BJ (cell line): ENCODE measurements at regions of chr21 and their contacts with region 1.

Region 1: DNA sequence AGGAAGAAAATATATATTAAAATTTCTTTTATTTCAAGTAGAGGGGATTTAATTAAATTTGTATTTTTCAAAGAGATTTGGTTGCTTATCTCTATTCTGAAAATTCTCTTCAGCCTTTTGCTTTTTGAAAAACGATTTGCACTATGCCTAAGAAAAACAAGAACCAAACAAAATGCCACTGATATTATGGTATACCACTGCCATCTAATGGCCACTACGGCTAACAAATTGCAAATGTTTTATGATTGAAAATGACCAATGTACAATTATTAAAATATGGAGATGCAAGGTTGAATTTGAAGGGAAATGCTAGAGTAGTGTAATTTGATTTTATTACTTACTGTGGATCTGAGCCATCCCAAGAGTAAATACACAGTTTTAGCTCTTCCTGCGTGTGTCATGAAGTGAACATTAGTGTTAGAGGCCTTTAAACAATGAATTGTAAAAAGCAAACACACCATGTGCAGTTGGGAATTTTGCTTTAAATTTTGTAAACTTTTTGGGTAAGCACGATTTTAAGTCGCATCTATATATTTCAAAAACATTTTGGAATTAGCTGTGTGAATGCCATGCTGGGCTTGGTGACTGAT is 137.4 kb upstream of the USP25 start:
- DNase-seq: no peak
- H3K4me3 ChIP-seq: no peak overlapping the region
- H3K27me3 ChIP-seq: 0 out of 2 replicates have a peak, but pooled peaks cover 1% of the 10 kb centered on the region
- CTCF ChIP-seq: peak; percentile 57

Region 2: GRCh38 chr21:14259747-14260146 is 1332.6 kb before region 1 on chr21:
- CTCF ChIA-PET with region 1: interaction called, 11 read pairs
- POLR2A ChIA-PET with region 1: no interaction called
- DNase-seq: no peak
- H3K4me3 ChIP-seq: no peak overlapping the region
- H3K27me3 ChIP-seq: no peaks in the 10 kb centered on the region; the same call in 1 of the 2 replicates
- CTCF ChIP-seq: peak; percentile 45

Region 3: GRCh38 chr21:15616864-15617574 is 24.7 kb after region 1 on chr21:
- CTCF ChIA-PET with region 1: no interaction called
- POLR2A ChIA-PET with region 1: no interaction called
- DNase-seq: no peak
- H3K4me3 ChIP-seq: no peak overlapping the region
- H3K27me3 ChIP-seq: no peaks in the 10 kb centered on the region
- CTCF ChIP-seq: no peak

Region 4: DNA sequence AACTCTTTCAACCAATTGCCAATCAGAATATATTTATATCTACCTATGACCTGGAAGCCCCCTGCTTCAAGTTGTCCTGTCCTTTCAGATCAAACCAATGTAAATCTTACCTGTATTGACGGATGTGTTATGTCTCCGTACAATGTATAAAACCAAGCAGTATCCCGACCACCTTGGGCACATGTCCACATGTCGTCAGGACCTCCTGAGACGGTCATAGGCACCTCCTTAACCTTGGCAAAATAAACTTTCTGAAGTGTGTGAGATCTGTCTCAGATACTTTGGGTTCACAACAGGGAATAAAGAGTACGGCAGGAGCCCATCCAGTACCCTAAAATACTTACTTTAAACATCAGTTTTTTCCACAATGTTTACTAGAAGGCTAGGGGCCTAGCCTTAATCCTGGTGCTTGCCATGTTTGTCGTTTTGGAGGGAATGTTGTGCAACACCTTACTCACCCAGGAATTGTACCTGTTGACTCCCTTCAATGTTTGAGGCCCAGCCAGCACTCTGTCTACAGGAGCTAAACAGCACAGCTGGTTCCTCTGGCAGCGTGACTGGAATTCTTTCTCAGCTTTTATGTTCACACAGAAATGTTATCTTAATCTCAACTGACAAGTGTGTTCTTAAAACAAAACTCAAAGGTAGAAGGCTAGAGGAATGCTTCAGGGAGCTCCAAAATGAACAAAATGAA is 46.6 kb after region 1 on chr21:
- CTCF ChIA-PET with region 1: no interaction called
- POLR2A ChIA-PET with region 1: no interaction called
- DNase-seq: no peak
- H3K4me3 ChIP-seq: no peak overlapping the region
- H3K27me3 ChIP-seq: no peaks in the 10 kb centered on the region
- CTCF ChIP-seq: no peak